ENCODE measurements at regions of chr2 and their contacts with region 1.

Region 1: DNA sequence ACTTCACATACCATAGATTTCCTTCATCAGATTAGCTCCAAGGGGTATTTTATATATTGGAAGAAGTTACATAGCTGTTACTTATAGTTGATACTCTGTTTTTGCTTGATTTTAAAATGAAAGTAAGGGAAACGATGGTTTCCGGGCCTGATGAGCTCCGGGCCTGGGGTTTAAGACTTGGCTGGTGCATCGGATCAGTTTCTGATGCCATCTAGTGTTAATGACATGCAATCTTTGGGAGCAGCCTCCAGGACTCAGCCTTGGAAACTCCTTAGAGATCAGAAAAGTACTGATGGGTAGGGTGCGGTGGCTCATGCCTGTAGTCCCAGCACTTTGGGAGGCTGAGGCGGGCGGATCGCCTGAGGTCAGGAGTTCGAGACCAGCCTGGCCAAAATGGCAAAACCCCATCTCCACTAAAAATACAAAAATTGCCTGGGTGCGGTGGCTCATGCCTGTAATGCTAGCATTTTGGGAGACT is 47.1 kb upstream of the CNOT11 start:
- DNase-seq: peak; percentile 82
- H3K4me3 ChIP-seq: peak overlapping the region; percentile 10 to 55 (median 42)
- H3K27ac ChIP-seq: peak overlapping the region; percentile 48
- H3K4me1 ChIP-seq: peaks cover 8% of the 10 kb centered on the region
- H3K27me3 ChIP-seq: no peaks in the 10 kb centered on the region
- CTCF ChIP-seq: peak; percentile 60 to 70

Region 2: DNA sequence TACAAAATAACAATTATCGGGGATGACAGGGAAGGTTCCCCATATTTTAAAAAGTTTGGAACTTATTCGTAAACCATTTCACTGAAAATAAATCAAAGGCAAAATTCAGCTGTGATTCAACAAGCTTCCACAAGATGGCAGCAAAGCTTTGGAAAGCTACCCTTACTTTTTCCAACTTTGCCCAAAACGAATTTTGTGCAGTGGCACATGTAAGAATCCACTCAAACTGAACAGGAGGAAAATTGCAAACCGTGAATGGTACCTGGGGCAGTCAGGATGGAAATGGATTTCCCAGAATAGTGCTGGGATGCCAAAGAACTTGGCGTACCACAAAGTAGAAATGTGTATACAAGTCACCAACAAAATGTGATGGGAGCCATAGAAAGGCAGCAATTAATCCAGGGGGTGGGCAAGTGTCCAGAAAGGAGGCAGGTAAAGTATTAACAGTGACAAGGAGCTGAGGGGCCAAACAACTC is 192.8 kb before region 1 on chr2:
- CTCF ChIA-PET with region 1: interaction called, 4 read pairs
- dilution Hi-C with region 1: loop called (anchors 5 kb)
- in situ Hi-C with region 1: no loop called
- intact Hi-C with region 1: loop called (anchors 1 kb)
- DNase-seq: peak; percentile 20
- H3K4me3 ChIP-seq: no peak overlapping the region
- H3K27ac ChIP-seq: no peak overlapping the region
- H3K4me1 ChIP-seq: no peaks in the 10 kb centered on the region
- H3K27me3 ChIP-seq: no peaks in the 10 kb centered on the region
- CTCF ChIP-seq: peak; percentile 76

Region 3: GRCh38 chr2:101026253-101026701 is 179.3 kb before region 1 on chr2:
- CTCF ChIA-PET with region 1: no interaction called
- dilution Hi-C with region 1: no loop called
- in situ Hi-C with region 1: loop called (anchors 10 kb)
- intact Hi-C with region 1: no loop called
- DNase-seq: no peak
- H3K4me3 ChIP-seq: no peak overlapping the region
- H3K27ac ChIP-seq: no peak overlapping the region
- H3K4me1 ChIP-seq: no peaks in the 10 kb centered on the region
- H3K27me3 ChIP-seq: no peaks in the 10 kb centered on the region
- CTCF ChIP-seq: no peak

Region 4: GRCh38 chr2:101036562-101037457 is 168.8 kb before region 1 on chr2:
- CTCF ChIA-PET with region 1: interaction called, 13 read pairs
- dilution Hi-C with region 1: no loop called
- in situ Hi-C with region 1: no loop called
- intact Hi-C with region 1: loop called (anchors 1 kb)
- DNase-seq: peak; percentile 8
- H3K4me3 ChIP-seq: no peak overlapping the region
- H3K27ac ChIP-seq: no peak overlapping the region
- H3K4me1 ChIP-seq: no peaks in the 10 kb centered on the region
- H3K27me3 ChIP-seq: no peaks in the 10 kb centered on the region
- CTCF ChIP-seq: peak; percentile 52 to 58

Region 5: GRCh38 chr2:102558463-102558862 is 1352.9 kb after region 1 on chr2:
- CTCF ChIA-PET with region 1: no interaction called
- dilution Hi-C with region 1: no loop called
- in situ Hi-C with region 1: no loop called
- intact Hi-C with region 1: no loop called
- DNase-seq: no peak
- H3K4me3 ChIP-seq: no peak overlapping the region
- H3K27ac ChIP-seq: no peak overlapping the region
- H3K4me1 ChIP-seq: no peaks in the 10 kb centered on the region
- H3K27me3 ChIP-seq: peaks cover 5% of the 10 kb centered on the region
- CTCF ChIP-seq: no peak

Measured in mammary epithelial cell (primary cell).